Left ventricle myocardium superior (tissue), 1 donor: ENCODE measurements at regions of chr6 and their contacts with region 1.

Region 1: DNA sequence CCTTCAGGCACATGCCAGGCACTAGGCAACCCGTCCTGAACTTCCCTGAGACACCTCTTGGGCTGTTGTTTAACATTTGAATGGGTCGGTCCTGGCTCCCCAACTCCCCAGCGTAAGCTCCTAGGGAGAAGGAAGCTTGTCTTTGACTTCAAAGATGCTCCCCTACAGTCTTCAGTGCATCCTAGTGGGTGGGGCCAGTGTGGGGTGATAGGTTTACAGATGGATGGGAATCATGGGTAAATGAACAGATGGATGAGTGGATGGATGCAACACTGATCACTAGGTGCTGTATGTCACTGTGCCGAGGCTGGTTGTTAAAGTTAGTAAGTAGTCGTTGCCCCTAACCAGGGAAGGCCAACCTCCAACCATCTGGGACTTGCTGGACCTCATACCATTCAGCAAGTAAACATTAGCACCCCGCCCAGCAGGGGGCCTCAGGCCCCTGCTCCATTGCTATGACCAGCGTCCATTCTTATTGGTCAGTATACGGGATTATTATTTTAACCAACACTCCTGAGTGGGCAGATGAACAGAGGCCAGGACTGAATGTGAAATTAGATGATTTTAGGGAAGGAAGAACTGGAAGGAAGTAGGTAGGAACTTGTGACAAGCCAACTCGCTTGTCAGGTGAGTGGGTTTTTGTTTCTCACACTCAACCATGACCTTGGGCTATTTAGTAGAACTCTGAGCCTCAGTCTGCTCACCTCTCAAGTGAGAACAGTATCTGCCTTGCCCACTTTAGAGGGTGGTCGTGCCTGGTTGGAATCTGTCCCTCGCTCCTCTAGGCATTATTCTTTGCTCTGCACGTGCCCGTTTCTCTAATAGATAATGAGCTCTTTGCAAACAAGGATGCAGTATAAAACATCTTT is 82.9 kb upstream of the FOXP4 start:
- DNase-seq: peak; percentile 86
- ATAC-seq: peak; percentile 94

Region 2: DNA sequence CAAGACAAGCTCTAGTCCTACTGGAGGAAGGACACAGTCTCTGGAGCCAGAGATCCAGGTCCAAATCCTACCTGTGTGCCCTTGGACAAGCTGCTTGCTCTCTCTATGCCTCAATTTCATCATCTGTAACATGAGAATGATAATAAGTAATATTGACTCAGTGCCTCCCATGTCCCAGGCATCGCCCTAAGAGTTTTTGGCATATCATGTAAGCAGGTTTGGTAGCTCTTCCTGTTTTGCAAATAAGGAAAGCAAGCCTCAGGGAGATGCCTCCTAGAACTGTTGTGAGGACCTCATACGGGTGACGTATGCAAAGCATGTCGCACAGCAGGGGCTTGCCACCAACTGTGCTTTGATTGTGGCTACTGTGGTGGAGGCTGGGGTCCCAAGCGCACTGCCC is 814.4 kb before region 1 on chr6:
- intact Hi-C with region 1: no loop called
- DNase-seq: no peak
- ATAC-seq: no peak

Region 3: GRCh38 chr6:41558033-41558807 is 94.9 kb after region 1 on chr6:
- intact Hi-C with region 1: no loop called
- DNase-seq: no peak
- ATAC-seq: no peak

Region 4: DNA sequence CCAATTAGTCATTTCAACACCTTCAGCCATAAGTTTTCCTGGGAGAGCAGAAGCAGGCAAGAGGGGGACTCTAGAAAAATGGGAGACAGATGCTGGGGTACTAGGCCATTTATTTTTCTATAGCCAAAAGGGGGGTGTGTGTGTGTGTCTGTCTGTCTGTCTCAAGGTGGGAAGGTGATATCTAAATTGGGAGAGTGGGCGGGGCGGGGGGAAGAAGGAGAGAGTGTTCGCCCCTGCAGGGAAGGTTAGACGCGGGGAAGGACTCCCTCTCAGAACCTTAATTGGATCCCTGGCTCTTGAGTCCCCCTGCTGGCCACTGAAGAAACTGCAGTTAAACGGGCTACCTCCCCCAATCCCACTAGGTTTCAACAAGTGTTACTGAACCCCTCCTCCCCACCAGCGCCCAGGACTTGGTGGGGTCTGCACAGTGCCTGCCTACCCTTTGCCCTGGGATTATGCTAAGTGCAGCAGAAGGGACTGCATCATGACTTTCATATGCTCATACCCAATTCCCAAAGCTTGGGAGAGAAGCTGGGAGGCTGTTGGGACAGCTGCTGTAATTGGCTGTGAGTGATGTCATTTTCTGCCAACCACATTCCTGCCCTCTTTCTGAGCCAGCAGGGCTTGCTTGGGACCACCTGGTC is 128.7 kb after region 1 on chr6:
- intact Hi-C with region 1: loop called (anchors 2 kb)
- DNase-seq: peak; percentile 72
- ATAC-seq: peak; percentile 69